ENCODE measurements at regions of chr4 and their contacts with region 1.

Region 1: DNA sequence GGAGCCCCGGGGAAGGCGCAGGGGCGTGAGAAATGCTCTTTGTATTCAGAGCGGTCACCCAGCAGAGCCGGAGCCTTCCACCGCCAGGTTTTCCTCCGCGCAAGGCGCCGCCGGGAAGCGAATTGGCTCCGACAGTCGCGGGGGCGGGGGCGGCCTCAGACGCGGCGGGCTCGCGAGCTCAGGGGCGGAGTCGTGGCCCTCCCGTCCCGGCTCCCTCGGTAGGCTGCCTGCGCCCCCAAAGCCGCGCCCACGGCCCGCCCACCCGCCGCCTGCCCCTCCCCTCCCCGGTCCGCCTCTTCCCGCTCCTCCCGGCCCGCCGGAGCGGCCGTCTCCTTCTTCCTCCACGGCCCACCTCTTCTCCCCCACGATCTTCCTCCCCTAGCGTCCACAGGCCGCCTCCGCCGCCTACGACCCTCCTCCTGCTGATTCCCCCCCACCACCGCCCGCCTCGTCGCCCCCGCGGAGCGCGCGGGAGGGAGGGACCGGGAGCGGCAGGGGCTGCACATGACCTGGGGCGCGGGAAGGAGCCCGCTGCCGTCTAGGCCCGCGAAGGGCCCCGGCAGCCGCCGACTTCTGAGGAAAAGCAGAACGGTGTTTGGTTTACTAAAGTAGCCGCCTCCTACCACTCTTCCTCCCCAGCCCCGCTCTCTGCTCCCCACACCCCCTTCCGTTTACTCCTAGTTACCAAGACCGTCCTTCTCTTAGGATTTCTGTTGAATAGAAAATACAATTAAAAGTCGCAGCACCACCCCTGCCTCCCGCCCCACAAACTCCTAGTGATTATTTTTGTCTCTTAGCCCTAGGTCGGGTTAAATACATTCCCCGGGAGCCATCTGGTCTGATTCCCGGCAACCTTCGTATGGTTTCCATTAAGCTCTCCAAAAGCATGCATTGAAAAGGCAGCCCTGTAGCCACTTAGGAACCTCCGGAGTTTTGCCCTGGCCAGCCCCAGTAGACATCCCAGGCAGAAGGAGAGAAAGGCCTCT is 53.2 kb downstream of the C4orf51 start:
- DNase-seq: peak; percentile 81 to 99 (median 92)

Region 2: GRCh38 chr4:145618932-145619638 is 114.1 kb before region 1 on chr4 and contains the start of gene MMAA:
- intact Hi-C with region 1: loop called (anchors 10 kb)
- DNase-seq: peak; percentile 90 to 99 (median 94)

Region 3: GRCh38 chr4:145881989-145882388 is 148.8 kb after region 1 on chr4:
- intact Hi-C with region 1: loop called (anchors 5 kb)
- DNase-seq: peak in 2 of 10 donors; percentile 28 to 68

Region 4: GRCh38 chr4:145936142-145936996 is 203.2 kb after region 1 on chr4:
- intact Hi-C with region 1: loop called (anchors 5 kb)
- DNase-seq: peak; percentile 39 to 93 (median 60)

Region 5: DNA sequence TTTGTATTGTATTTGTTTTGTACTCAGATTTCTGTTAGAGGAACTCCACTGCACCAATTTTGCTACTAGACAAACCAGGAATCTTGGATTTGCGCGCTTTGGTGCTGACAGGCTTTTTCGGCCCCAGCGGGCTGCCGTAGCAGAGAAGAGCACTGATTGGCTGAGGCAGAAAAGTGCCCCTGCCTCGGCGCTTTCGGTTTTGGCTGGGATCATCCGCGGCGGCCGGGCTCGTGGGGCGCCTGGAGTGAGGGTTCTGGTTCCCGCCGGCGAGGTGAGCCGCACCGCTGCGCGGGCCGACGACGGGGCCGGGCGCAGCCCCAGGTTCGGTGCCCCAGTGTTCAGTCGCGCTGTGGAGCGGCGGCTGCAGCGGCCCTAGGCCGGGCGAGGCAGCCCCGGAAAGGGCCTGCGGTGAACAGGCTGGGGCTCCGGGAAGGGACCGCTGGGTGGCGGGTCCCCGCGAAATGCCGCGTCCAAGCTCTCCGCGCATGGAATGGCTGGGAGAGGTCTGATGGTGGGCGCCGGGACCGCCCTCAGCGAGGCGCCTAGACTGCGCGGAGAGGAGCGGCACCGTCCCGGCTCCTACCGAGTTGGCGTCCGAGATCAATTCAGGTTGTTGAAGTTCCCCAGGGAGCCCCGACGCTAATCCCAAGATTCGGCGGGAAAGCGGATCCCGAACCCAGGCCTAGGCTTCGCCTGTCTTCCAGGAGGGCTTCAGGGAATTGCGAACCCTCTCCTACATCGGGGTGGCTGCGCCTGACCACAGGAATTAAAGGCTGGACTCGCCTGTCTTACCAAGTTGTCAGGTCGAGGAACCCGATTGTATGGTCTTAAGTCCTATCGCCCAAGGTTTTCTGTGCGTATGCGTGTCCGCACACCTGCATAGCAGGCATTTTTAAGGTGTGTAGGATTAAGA is 442.6 kb after region 1 on chr4 and contains the start of gene LSM6:
- intact Hi-C with region 1: loop called (anchors 5 kb)
- DNase-seq: peak; percentile 89 to 98 (median 93)

Measured in posterior cingulate gyrus (tissue), 11 donors.